ENCODE measurements at regions of chr7 and their contacts with region 1.

Region 1: DNA sequence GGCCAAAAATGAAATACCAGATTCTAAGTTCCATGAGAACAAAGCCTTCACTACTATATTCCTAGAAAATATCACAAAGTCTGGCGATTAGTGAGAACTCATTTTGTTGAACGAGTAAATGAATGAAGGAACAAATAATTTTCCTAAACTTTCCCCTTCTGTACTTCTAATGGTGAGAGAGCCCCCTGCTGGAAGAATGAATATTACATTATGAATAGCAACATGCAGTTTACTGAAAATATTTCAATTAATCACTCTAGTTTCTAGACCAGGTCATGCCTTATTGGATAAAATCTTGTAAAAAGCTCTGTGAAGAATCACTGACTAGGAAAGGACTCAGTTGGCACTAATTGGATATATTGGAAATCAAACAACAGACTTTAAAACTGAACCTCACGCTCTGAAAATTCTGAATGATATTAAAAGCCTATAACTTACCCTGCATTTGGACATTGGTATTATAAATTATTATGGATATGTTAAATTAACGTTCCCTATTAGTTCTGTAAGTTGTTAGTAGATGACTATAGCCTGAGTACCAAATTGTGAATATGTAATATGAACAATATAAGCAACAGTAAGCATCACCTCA is 32.4 kb upstream of the MTPN start:
- DNase-seq: no peak
- ATAC-seq: no peak
- H3K4me3 ChIP-seq: no peak overlapping the region
- H3K27ac ChIP-seq: no peak overlapping the region
- H3K4me1 ChIP-seq: no peaks in the 10 kb centered on the region
- H3K27me3 ChIP-seq: no peaks in the 10 kb centered on the region

Region 2: DNA sequence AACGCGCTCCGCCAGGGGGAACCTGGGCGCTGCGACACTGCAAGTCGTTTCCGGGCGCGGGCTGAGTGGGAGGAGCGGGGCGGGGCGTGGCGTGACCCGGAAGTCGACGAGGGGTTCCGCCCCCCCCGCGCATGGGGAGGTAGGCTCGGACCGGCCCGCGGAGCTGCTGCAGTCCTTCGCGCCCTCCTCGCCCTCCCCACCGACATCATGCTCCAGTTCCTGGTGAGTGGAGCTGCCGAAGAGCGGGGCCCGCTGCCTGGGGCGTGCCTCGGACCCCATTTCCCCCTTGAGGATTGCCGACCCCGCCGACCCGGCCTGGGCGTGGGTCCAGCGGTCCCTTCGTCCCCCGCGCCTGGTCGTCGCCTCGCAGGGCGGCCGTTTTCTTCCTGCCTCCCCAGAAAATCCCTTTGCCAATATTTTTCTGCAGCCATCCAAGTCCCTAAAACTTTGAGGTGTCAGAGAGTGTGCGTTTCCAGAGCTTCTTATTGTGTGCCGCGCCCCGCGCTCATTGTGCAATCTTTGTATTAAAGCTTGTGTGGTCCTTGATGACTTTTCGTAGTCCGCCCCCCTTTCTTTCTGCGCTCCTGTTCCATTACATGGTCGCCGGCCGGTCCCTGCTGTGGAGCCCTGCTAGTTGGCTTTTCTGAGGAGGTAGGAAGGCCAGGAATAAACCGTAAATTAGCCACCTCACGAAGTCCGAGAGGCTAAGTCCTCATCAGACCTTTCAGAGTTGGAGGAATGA is 347.0 kb before region 1 on chr7 and contains the start of gene STMP1:
- intact Hi-C with region 1: loop called in 1 of 4 experiments (anchors 10 kb)
- DNase-seq: peak; percentile 97 to 99 (median 99)
- ATAC-seq: peak; percentile 98
- H3K4me3 ChIP-seq: peak within 1 kb of the TSS; percentile 79
- H3K27ac ChIP-seq: peak within 1 kb of the TSS; percentile 96
- H3K4me1 ChIP-seq: no peaks in the 10 kb centered on the region
- H3K27me3 ChIP-seq: no peaks in the 10 kb centered on the region
- total RNA-seq, gene STMP1: 27.4 to 30.9 (median 28.7) TPM

Region 3: GRCh38 chr7:135690566-135690965 is 319.0 kb before region 1 on chr7:
- intact Hi-C with region 1: no loop called
- DNase-seq: no peak
- ATAC-seq: no peak
- H3K4me3 ChIP-seq: no peak overlapping the region
- H3K27ac ChIP-seq: no peak overlapping the region
- H3K4me1 ChIP-seq: no peaks in the 10 kb centered on the region
- H3K27me3 ChIP-seq: no peaks in the 10 kb centered on the region

Region 4: GRCh38 chr7:135801045-135801693 is 208.4 kb before region 1 on chr7:
- intact Hi-C with region 1: loop called (anchors 1 to 5 kb)
- DNase-seq: no peak
- ATAC-seq: peak; percentile 51 to 72
- H3K4me3 ChIP-seq: no peak overlapping the region
- H3K27ac ChIP-seq: no peak overlapping the region
- H3K4me1 ChIP-seq: peaks cover 5% of the 10 kb centered on the region
- H3K27me3 ChIP-seq: no peaks in the 10 kb centered on the region

Region 5: GRCh38 chr7:136104269-136104603 is 94.7 kb after region 1 on chr7:
- intact Hi-C with region 1: no loop called
- DNase-seq: no peak
- ATAC-seq: no peak
- H3K4me3 ChIP-seq: no peak overlapping the region
- H3K27ac ChIP-seq: no peak overlapping the region
- H3K4me1 ChIP-seq: no peaks in the 10 kb centered on the region
- H3K27me3 ChIP-seq: no peaks in the 10 kb centered on the region

Measured in right cardiac atrium (tissue), 5 donors.